Aorta (tissue), 5 donors: ENCODE measurements at regions of chr1 and their contacts with region 1.

Region 1: DNA sequence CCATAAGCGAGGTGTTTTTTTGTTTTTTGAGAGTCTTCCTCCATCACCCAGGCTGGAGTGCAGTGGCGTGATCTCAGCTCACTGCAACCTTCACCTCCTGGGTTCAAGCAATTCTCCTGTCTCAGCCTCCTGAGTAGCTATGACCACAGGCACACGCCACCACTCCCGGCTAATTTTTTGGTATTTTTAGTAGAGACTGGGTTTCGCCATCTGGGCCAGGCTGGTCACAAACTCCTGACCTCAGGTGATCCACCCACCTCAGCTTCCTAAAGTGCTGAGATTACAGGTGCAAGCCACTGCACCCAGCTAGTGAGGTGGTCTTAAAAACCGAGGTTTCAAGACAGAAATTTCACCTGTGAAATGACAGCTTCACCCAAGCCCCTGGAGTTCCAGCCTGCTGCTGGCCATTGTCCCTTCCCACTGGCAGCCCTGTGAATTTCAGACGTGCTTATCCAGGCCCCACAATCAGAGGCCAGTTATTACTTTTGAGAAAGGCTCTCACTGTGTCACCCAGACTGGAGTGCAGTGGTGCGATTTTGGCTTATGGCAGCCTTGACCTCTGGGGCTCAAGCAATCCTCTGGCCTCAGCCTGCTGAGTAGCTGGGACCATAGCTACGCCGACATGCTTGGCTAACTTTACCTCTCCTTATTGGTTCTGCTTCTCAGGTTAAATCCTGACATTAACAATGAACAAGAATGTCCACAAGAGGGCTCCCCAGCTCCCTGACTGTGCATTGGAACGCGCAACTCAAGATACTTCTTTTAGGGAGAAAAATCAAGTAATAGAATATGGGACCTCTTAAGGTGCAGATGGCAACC is 19.4 kb downstream of the ENO1 start:
- DNase-seq: no peak
- ATAC-seq: peak; percentile 74
- H3K4me3 ChIP-seq: no peak overlapping the region
- H3K27ac ChIP-seq: peak overlapping the region in 1 of 2 donors; percentile 47
- H3K4me1 ChIP-seq: peaks cover 0 to 2% of the 10 kb centered on the region in 2 donors
- H3K27me3 ChIP-seq: no peaks in the 10 kb centered on the region

Region 2: GRCh38 chr1:7478809-7479499 is 1380.1 kb before region 1 on chr1:
- intact Hi-C with region 1: no loop called
- DNase-seq: peak in 1 of 2 donors; percentile 72
- ATAC-seq: no peak
- H3K4me3 ChIP-seq: no peak overlapping the region
- H3K27ac ChIP-seq: no peak overlapping the region
- H3K4me1 ChIP-seq: no peaks in the 10 kb centered on the region
- H3K27me3 ChIP-seq: no peaks in the 10 kb centered on the region

Region 3: GRCh38 chr1:8789314-8790214 is 69.5 kb before region 1 on chr1:
- intact Hi-C with region 1: no loop called
- DNase-seq: no peak
- ATAC-seq: no peak
- H3K4me3 ChIP-seq: no peak overlapping the region
- H3K27ac ChIP-seq: no peak overlapping the region
- H3K4me1 ChIP-seq: no peaks in the 10 kb centered on the region
- H3K27me3 ChIP-seq: no peaks in the 10 kb centered on the region

Region 4: GRCh38 chr1:8903908-8904650 is 45.0 kb after region 1 on chr1:
- intact Hi-C with region 1: loop called in 1 of 2 experiments (anchors 5 kb)
- DNase-seq: peak; percentile 78 to 84
- ATAC-seq: peak; percentile 68
- H3K4me3 ChIP-seq: no peak overlapping the region
- H3K27ac ChIP-seq: peak overlapping the region; percentile 57 to 98
- H3K4me1 ChIP-seq: no peaks in the 10 kb centered on the region
- H3K27me3 ChIP-seq: no peaks in the 10 kb centered on the region

Region 5: GRCh38 chr1:8925406-8925805 is 66.3 kb after region 1 on chr1:
- intact Hi-C with region 1: no loop called
- DNase-seq: no peak
- ATAC-seq: no peak
- H3K4me3 ChIP-seq: no peak overlapping the region
- H3K27ac ChIP-seq: no peak overlapping the region
- H3K4me1 ChIP-seq: no peaks in the 10 kb centered on the region
- H3K27me3 ChIP-seq: no peaks in the 10 kb centered on the region

Region 6: DNA sequence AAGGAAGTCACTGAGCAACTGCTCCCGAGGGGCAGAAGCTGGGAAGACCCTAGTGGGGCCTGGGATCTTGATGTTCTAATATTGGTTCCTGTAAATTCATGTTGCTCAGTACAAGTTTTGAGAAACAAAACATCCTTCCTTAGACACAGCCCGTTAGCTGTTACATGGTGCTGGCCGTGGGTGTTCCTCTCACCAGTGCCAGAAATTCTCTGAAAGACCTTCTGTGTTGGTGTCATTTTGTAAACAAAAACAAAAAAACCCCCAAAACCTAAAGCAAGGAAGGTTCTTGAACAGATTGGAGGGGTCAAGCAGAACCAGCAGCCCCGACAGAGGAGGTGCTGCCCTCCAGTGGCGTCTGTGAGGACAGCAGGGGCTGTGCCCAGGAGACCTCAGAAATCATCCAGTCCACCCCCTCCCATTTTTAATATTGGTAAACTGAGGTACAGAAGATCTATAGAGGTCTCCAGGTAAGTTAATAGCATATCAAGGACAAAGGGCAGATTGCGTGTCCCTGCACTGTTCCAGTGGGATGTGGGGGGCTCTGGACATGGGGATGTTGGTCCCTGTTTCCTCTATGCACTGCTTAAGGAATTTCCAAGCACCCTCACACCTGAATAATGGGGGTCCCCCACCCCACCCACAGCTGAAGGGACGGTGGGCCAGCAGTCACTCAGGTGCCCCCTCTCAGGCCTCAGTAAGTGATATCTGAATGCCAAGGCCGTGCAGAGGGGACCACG is 129.0 kb after region 1 on chr1:
- intact Hi-C with region 1: loop called (anchors 5 kb)
- DNase-seq: peak; percentile 73 to 85
- ATAC-seq: peak; percentile 77
- H3K4me3 ChIP-seq: no peak overlapping the region
- H3K27ac ChIP-seq: no peak overlapping the region
- H3K4me1 ChIP-seq: peaks cover 0 to 1% of the 10 kb centered on the region in 2 donors
- H3K27me3 ChIP-seq: no peaks in the 10 kb centered on the region